ENCODE measurements at regions of chr1 and their contacts with region 1.

Region 1: GRCh38 chr1:94805912-94806311 is 14.2 kb upstream of the SLC44A3 start:
- DNase-seq: peak; percentile 26 to 43
- ATAC-seq: peak; percentile 38 to 53; a peak in 3 of 6 replicates
- H3K4me3 ChIP-seq: no peak overlapping the region
- H3K27ac ChIP-seq: no peak overlapping the region
- H3K4me1 ChIP-seq: peaks cover 9% of the 10 kb centered on the region; the same call in 2 of the 3 replicates
- CTCF ChIP-seq: peak; percentile 88
- EP300 ChIP-seq: no peak
- POLR2A ChIP-seq: no peak
- RAD21 ChIP-seq: peak; percentile 90 to 93

Region 2: GRCh38 chr1:94471271-94471670 is 334.6 kb before region 1 on chr1:
- CTCF ChIA-PET with region 1: interaction called, 18 read pairs
- POLR2A ChIA-PET with region 1: no interaction called
- DNase-seq: no peak
- ATAC-seq: no peak
- H3K4me3 ChIP-seq: no peak overlapping the region
- H3K27ac ChIP-seq: no peak overlapping the region
- H3K4me1 ChIP-seq: no peaks in the 10 kb centered on the region
- CTCF ChIP-seq: no peak
- EP300 ChIP-seq: no peak
- POLR2A ChIP-seq: no peak
- RAD21 ChIP-seq: no peak

Region 3: DNA sequence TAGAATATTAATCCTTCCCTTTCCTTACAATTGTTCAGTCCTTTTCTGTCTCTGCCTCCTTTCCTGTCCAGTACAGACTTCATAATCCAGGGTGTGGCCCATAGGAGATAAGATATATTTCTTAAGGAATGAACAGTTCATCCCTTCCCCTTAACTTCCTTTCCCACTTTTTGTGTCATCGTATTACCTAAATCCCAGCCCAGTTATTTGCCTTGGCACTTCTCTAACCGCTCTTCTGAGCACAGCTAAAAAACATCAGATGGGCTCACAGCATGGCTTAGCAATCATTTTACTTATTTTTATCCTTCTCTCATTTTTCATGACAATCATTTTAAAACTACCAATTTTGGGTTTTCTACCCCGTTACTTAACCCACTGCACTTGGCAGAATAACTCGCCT is 304.0 kb before region 1 on chr1:
- CTCF ChIA-PET with region 1: interaction called, 10 read pairs
- POLR2A ChIA-PET with region 1: no interaction called
- DNase-seq: no peak
- ATAC-seq: no peak
- H3K4me3 ChIP-seq: no peak overlapping the region
- H3K27ac ChIP-seq: no peak overlapping the region
- H3K4me1 ChIP-seq: no peaks in the 10 kb centered on the region
- CTCF ChIP-seq: no peak
- EP300 ChIP-seq: no peak
- POLR2A ChIP-seq: no peak
- RAD21 ChIP-seq: no peak

Region 4: DNA sequence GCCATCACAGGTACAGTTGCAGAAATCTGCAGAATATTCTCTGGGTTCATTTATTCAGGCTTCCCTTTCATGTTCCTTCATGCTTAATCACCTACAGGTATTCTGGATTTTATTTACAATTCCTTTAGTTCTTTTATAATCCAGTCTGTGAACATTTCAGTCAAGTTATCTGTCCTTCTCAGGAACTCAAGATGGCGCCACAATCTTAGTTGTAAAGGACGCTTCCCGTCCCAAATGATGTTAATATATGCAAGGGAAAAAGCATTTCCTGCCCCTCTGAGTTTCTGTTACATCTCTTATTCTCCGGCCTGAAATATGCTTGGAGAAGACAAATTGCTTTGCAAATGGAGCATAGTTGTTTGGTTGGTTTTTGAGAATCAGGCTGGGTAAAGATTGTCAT is 283.6 kb before region 1 on chr1:
- CTCF ChIA-PET with region 1: interaction called, 89 read pairs
- POLR2A ChIA-PET with region 1: no interaction called
- DNase-seq: peak in 1 of 2 experiments; percentile 41
- ATAC-seq: peak in 1 of 2 experiments; percentile 38; a peak in 1 of 6 replicates
- H3K4me3 ChIP-seq: no peak overlapping the region
- H3K27ac ChIP-seq: no peak overlapping the region
- H3K4me1 ChIP-seq: no peaks in the 10 kb centered on the region
- CTCF ChIP-seq: peak; percentile 45
- EP300 ChIP-seq: no peak
- POLR2A ChIP-seq: no peak
- RAD21 ChIP-seq: peak; percentile 64 to 65

Region 5: GRCh38 chr1:94541175-94542087 is 264.5 kb before region 1 on chr1 and contains the start of gene F3:
- CTCF ChIA-PET with region 1: interaction called, 11 read pairs
- POLR2A ChIA-PET with region 1: no interaction called
- DNase-seq: peak; percentile 69 to 78
- ATAC-seq: peak; percentile 93 to 94
- H3K4me3 ChIP-seq: peak within 1 kb of the TSS; percentile 85
- H3K27ac ChIP-seq: peak within 1 kb of the TSS; percentile 88 to 95
- H3K4me1 ChIP-seq: peaks cover 40% of the 10 kb centered on the region
- CTCF ChIP-seq: no peak; the same call in 2 of the 3 replicates
- EP300 ChIP-seq: no peak
- POLR2A ChIP-seq: peak; percentile 34
- RAD21 ChIP-seq: no peak; a peak in 1 of 5 replicates
- polyA plus RNA-seq, gene F3: 2.6 and 3.2 TPM in 2 replicates

Region 6: GRCh38 chr1:94589728-94590127 is 216.2 kb before region 1 on chr1:
- CTCF ChIA-PET with region 1: no interaction called
- POLR2A ChIA-PET with region 1: no interaction called
- DNase-seq: no peak
- ATAC-seq: no peak
- H3K4me3 ChIP-seq: no peak overlapping the region
- H3K27ac ChIP-seq: no peak overlapping the region
- H3K4me1 ChIP-seq: no peaks in the 10 kb centered on the region
- CTCF ChIP-seq: no peak
- EP300 ChIP-seq: no peak
- POLR2A ChIP-seq: no peak
- RAD21 ChIP-seq: no peak

Measured in A549 (cell line).